ENCODE measurements at regions of chr9 and their contacts with region 1.

Region 1: DNA sequence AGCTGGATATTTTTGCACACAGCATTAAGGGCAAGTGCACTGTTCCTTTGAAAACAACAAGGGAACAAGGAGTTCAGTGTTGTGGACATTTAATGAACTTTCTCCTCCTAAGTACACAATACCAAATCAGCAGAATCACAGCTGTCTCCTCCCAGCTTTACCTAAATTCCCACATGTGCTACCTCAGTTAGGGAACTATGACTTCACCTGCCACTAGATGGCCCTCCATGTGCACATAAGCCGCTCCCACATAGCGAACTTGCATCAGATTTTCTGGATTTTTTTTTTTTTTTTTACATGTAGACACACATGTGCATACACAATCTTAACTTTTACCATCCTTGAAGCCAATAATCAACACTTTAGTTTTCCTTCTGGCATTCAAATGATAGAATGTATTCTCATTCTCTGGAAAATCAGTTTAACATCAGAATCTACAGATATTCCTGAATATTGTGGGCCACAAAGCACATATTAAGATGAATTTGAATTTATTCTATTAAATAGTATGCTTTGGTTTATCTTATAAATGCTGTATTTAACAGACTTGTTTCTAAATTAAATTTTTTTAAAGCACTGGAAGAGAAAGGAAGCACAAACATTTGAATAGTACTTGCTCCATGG is 123.6 kb downstream of the PALM2AKAP2 start:
- DNase-seq: peak; percentile 87
- H3K27ac ChIP-seq: no peak overlapping the region
- CTCF ChIP-seq: peak; percentile 98

Region 2: GRCh38 chr9:109880277-109881169 is 23.1 kb before region 1 on chr9:
- CTCF ChIA-PET with region 1: no interaction called
- POLR2A ChIA-PET with region 1: no interaction called
- DNase-seq: peak; percentile 65
- H3K27ac ChIP-seq: no peak overlapping the region
- CTCF ChIP-seq: peak; percentile 66

Region 3: GRCh38 chr9:110050925-110051355 is 147.3 kb after region 1 on chr9:
- CTCF ChIA-PET with region 1: interaction called, 13 read pairs
- POLR2A ChIA-PET with region 1: no interaction called
- DNase-seq: peak; percentile 94
- H3K27ac ChIP-seq: peak overlapping the region; percentile 87
- CTCF ChIP-seq: no peak

Region 4: DNA sequence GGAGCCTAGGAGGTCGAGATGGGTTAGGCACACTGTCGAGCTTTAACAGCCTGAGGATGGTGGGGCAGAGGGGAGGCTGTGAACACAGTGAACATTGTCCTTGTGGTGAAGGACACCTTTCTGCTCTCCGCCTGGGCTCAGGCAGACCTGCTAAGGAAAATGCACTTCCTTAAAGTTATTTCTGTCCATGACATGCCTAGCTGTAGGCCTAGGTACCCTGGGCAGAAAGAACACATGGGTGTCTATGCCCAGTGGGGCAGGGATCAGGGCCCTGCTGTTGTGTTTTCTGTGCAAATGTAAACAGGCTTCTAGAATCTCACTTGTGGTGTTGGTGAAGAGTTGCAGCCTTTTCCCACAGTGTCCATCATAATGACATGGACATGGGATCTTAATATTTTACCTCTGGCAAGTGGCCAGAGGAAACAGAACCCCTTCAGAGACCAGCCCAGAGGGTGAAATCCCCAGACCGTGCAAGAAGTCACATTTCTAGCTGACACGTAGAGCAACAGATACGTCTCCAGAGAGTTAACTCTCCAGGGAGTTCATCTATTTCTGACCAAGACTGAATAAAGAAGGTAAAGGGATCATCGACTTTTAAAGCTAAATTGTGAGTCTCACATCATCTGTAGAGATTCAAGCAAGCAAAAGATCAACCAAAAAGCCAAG is 225.2 kb after region 1 on chr9:
- CTCF ChIA-PET with region 1: interaction called, 11 read pairs
- POLR2A ChIA-PET with region 1: no interaction called
- DNase-seq: no peak
- H3K27ac ChIP-seq: no peak overlapping the region
- CTCF ChIP-seq: no peak

Region 5: DNA sequence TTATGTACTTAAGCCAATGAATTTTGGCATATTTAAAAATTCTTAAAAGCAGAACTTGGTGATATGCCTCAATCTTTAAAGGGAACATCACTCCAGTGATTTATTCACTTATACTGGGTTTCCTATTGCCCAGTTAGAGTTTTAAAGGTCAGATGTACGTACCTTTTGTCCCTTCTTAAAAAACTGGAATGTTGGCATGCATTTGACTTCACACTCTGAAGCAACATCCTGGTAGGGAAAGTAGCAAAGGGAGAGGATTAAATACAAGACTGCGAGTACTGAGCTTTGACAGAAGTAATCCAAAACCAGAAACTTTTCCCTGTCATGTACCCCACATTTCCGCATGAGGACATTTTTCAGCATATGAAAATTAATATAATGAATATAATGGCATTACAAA is 341.0 kb after region 1 on chr9:
- CTCF ChIA-PET with region 1: interaction called, 13 read pairs
- POLR2A ChIA-PET with region 1: no interaction called
- DNase-seq: no peak
- H3K27ac ChIP-seq: no peak overlapping the region
- CTCF ChIP-seq: no peak

Measured in RWPE1 (cell line).